Heart right ventricle (tissue), 16 donors: ENCODE measurements at regions of chr3 and their contacts with region 1.

Region 1: GRCh38 chr3:47475570-47476329 is at the start of gene SCAP:
- DNase-seq: peak; percentile 92 to 93
- ATAC-seq: peak; percentile 96 to 99 (median 98)
- H3K4me3 ChIP-seq: peak within 1 kb of the TSS; percentile 84 to 98 (median 94)
- H3K27ac ChIP-seq: peak within 1 kb of the TSS; percentile 62 to 93 (median 86)
- H3K4me1 ChIP-seq: peaks cover 7 to 32% (median 20%) of the 10 kb centered on the region in 9 donors
- H3K27me3 ChIP-seq: no peaks in the 10 kb centered on the region
- CTCF ChIP-seq: peak; percentile 85 to 98 (median 96)
- total RNA-seq, gene SCAP: 31.7 to 56.7 (median 40.4) TPM

Region 2: DNA sequence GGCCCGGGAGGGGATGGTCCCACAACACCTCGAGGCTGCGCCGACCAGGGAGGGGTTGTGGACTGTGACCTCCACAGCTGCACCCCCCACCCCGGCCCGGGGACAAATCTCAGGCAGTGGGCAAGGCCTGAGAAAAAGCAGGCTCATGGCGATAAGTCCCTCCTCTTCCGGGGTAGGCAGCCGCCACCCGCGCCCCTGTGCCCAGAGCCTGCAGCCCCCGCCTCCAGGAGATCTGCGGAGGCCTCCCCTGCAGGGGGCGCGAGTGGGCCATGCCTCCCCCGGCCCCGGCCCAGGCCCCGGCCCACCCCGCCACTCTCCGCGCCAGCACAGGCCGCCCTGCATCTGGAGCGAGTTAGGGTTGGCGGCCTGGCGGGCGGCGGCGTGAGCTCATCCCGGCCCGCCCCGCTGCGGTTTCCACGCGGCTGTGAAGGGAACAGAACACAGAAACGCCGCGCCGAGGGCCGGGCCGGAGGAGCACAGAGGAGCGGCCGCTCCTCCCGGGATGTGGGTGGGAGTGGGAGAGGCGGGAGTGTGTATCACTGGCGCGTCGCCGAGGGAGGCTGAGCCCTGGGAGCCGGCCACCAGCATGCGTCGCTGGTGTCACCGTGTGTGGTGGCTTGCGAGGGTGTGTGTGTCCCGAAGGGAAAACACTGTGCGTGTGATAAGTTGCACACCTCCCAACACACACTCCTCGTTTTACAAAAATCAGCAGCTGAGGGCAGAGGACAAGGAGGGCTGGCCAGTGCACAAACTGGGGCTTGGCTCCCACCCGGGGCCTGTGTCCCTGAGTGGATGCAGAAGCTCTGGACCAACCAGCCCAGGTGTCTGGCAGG is 629.7 kb before region 1 on chr3:
- intact Hi-C with region 1: no loop called
- DNase-seq: peak; percentile 68 to 82
- ATAC-seq: peak; percentile 39 to 71 (median 58)
- H3K4me3 ChIP-seq: peak overlapping the region; percentile 29 to 60 (median 52)
- H3K27ac ChIP-seq: peak overlapping the region; percentile 51 to 79 (median 68)
- H3K4me1 ChIP-seq: peaks cover 10 to 50% (median 28%) of the 10 kb centered on the region in 9 donors
- H3K27me3 ChIP-seq: peaks cover 0 to 7% (median 0%) of the 10 kb centered on the region in 7 donors
- CTCF ChIP-seq: peak in 8 of 9 donors; percentile 32 to 72 (median 65)

Region 3: DNA sequence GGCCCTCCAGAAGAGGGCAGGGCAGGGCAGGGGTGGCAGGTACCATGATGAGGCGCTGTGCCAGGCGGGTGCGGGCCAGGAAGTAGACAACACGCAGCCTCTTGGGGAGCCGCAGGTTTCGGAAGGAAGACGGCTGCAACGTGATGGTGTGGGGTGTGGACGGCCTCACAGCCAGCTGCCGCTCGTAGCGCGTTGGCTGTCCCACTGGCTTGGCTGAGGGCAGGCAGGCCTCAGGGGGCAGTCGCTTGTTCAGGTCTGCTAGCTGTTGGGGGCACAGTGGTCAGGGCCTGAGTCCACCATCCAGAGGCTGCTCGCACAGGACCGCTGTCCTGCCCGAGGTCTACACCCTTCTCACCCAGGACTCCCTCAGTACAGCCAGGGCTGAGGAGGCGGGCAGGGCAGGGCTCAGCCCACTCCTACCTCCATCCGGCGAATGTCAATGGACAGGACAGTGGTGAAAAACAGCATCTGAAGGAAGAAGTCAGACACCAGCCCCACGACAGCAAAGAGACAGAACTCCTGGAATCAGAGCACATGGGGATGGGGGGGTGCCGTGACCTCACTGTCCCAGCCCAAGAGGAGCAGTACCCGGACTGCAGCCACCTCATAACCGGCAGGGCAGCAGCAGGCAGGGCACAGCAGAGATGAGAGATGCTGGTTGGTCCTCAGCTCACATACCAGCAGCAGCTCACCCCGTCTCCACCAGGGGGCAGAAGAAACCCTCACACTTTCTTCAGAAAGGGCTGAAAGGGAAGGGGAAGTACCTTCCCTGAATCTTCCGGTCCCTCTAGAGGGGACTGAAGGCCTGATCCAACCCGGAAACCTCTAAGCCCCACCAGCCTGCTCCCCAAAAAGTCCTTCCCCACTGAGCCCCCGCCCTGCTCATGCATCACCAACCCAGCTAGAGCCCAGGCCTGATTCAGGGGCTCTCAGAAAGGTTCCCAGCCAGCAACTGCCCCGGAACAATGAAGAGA is 55.0 kb before region 1 on chr3:
- intact Hi-C with region 1: loop called in 9 of 10 experiments (anchors 1 to 5 kb)
- DNase-seq: peak; percentile 83 to 88
- ATAC-seq: peak; percentile 66 to 87 (median 79)
- H3K4me3 ChIP-seq: peak overlapping the region in 2 of 10 donors; percentile 6 to 13
- H3K27ac ChIP-seq: peak overlapping the region in 9 of 10 donors; percentile 45 to 87 (median 76)
- H3K4me1 ChIP-seq: peaks cover 10 to 24% (median 16%) of the 10 kb centered on the region in 9 donors
- H3K27me3 ChIP-seq: no peaks in the 10 kb centered on the region
- CTCF ChIP-seq: peak; percentile 76 to 95 (median 89)

Region 4: DNA sequence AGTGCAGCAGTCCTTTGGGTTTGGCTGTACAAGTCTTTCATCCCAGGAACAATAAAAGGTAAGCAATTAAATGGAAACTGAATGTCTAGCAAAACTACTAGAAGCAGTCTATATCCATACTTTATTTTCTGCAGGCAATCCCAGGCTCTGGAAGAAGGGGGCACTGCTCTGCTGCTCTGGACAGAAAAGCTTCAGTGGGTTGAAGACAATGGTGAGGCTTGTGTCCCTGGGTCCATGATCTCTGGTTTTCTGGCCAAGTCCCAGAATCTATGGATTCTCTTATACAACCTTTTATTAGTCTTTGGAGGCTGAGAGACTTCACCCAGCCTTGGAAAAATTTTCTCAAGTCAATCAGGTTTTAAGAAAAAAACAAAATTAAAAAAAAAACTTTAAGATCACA is 35.6 kb before region 1 on chr3:
- intact Hi-C with region 1: loop called in 2 of 10 experiments (anchors 5 kb)
- DNase-seq: no peak
- ATAC-seq: no peak
- H3K4me3 ChIP-seq: no peak overlapping the region
- H3K27ac ChIP-seq: no peak overlapping the region
- H3K4me1 ChIP-seq: peaks cover 0 to 24% (median 17%) of the 10 kb centered on the region in 9 donors
- H3K27me3 ChIP-seq: no peaks in the 10 kb centered on the region
- CTCF ChIP-seq: peak in 4 of 9 donors; percentile 13 to 27 (median 19)